ENCODE measurements at regions of chr11 and their contacts with region 1.

Region 1: GRCh38 chr11:73141848-73142286 is 251 bp downstream of the FCHSD2 start:
- DNase-seq: peak; percentile 89 to 91
- ATAC-seq: peak; percentile 71
- H3K4me3 ChIP-seq: peak overlapping the region; percentile 85
- H3K27ac ChIP-seq: peak overlapping the region; percentile 12 to 42
- H3K4me1 ChIP-seq: peaks cover 1 to 3% of the 10 kb centered on the region in 2 donors
- H3K27me3 ChIP-seq: no peaks in the 10 kb centered on the region

Region 2: GRCh38 chr11:72831513-72832300 is 310.2 kb before region 1 on chr11:
- intact Hi-C with region 1: loop called in 1 of 2 experiments (anchors 1 kb)
- DNase-seq: peak; percentile 88 to 94
- ATAC-seq: peak; percentile 88
- H3K4me3 ChIP-seq: no peak overlapping the region
- H3K27ac ChIP-seq: peak overlapping the region; percentile 85 to 91
- H3K4me1 ChIP-seq: peaks cover 7 to 12% of the 10 kb centered on the region in 2 donors
- H3K27me3 ChIP-seq: no peaks in the 10 kb centered on the region

Measured in aorta (tissue), 5 donors.